ENCODE measurements at regions of chr5 and their contacts with region 1.

Region 1: DNA sequence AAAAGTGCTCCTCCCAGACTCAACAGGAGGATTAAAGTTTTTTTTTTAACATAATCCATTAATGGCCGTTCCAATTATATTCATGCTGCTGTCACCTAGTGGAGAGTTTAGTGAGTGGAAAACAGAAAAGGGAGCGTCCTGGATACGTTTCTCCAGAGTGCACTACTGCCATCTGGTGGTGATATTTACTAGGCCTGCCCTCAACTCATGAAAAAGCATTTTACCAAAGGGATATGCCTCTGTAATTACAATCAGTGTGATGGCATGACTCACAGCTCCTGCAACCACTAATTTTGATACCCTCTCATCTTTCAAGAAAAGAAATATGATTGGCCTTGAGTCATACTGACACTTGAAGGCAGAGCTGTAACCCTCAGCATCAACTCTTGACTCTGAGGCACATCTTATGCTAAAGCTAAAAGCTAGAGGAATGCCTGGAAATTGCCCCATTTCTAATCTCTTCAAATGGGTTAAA is 20.0 kb downstream of the MINAR2 start:
- DNase-seq: peak; percentile 49
- H3K4me3 ChIP-seq: no peak overlapping the region
- CTCF ChIP-seq: peak; percentile 90

Region 2: GRCh38 chr5:128905571-128906110 is 862.3 kb before region 1 on chr5:
- CTCF ChIA-PET with region 1: interaction called, 10 read pairs
- POLR2A ChIA-PET with region 1: no interaction called
- DNase-seq: peak; percentile 4
- H3K4me3 ChIP-seq: no peak overlapping the region
- CTCF ChIP-seq: peak; percentile 68

Region 3: DNA sequence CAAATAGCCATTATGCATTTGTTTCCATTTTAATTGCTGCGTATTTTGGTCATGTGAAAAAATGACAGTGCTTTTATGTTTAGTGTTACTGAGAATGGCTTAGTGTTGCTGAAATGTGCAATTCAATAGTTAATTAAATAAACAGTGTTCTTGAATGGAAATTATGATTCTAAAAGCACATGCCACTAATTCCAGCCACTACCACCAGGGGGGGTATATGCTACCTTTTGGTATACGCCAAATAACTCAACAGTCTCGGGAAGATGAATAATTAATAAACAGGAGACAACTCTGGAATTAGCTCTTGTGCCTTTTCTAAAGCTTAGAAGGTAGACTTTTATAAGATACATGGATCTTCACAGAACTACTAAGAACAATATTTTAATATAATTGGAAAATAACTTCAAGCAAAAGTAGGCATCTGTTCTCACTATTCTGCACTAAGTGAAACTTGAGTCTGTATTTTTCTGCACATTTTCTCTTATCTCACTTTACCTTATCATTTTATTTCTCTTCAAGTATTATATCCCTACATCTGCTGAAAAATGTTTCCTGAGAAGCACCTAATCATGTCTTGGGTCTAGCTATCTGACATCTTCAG is 103.5 kb before region 1 on chr5:
- CTCF ChIA-PET with region 1: interaction called, 49 read pairs
- POLR2A ChIA-PET with region 1: no interaction called
- DNase-seq: no peak
- H3K4me3 ChIP-seq: no peak overlapping the region
- CTCF ChIP-seq: peak; percentile 65

Region 4: GRCh38 chr5:129852747-129853352 is 84.9 kb after region 1 on chr5:
- CTCF ChIA-PET with region 1: interaction called, 147 read pairs
- POLR2A ChIA-PET with region 1: no interaction called
- DNase-seq: peak; percentile 4
- H3K4me3 ChIP-seq: no peak overlapping the region
- CTCF ChIP-seq: peak; percentile 94

Region 5: GRCh38 chr5:131109540-131110255 is 1341.8 kb after region 1 on chr5:
- CTCF ChIA-PET with region 1: interaction called, 15 read pairs
- POLR2A ChIA-PET with region 1: no interaction called
- DNase-seq: peak; percentile 3
- H3K4me3 ChIP-seq: no peak overlapping the region
- CTCF ChIP-seq: peak; percentile 37

Measured in AG04449 (cell line).